B cell (primary cell): ENCODE measurements at regions of chr10 and their contacts with region 1.

Region 1: DNA sequence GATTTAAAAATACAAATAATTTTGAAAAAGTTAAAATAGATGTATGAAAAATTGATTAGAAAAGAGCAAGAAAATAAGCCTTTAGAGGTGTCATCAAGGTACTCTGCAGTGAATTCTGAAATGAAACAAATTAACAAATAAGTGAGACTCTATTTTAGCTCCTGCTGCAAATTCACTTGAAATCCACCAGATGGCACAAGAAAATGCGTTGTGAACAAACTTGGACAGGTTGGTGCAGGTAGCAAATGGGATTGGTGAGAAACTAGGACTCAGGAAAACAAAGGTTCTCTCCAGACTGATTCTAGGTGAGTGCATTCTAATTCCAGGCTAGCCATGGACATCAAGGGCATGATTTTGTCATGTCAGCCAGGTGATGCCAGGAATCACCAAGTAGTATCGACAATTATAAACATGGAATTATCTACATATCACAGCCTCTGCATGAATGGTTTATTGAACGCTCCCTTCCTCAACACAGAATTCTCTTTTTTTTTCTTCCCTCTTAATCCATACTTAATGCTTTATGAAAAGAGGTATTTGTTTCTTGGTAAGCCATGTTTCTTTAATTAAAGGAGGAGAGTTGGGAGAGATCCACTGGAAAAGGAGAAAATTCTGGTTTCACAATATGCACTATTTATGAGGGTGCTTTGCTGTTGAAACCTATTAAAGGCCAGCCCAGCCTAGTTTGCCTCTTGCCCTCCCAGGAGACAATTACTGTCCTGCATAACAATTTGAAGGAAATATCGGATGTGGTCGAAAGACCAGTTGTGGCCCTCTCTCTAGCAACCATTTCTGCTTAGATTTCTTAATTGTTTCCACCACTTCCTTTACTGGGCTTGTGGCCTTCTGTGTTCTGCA is 118.1 kb downstream of the ZNF365 start:
- DNase-seq: peak; percentile 65
- ATAC-seq: peak; percentile 53
- H3K4me3 ChIP-seq: no peak overlapping the region
- H3K4me3 Mint-ChIP-seq: no peak overlapping the region
- H3K27ac ChIP-seq: no peak overlapping the region
- H3K27ac Mint-ChIP-seq: no peak overlapping the region
- H3K4me1 ChIP-seq: peaks cover 9 to 11% of the 10 kb centered on the region in 2 donors
- H3K4me1 Mint-ChIP-seq: peaks cover 26% of the 10 kb centered on the region
- H3K27me3 ChIP-seq: no peaks in the 10 kb centered on the region
- H3K27me3 Mint-ChIP-seq: no peaks in the 10 kb centered on the region
- CTCF ChIP-seq: peak; percentile 85

Region 2: GRCh38 chr10:61974601-61975390 is 517.4 kb before region 1 on chr10:
- CTCF ChIA-PET with region 1: no interaction called
- POLR2A ChIA-PET with region 1: no interaction called
- intact Hi-C with region 1: no loop called
- DNase-seq: peak; percentile 47
- ATAC-seq: no peak
- H3K4me3 ChIP-seq: no peak overlapping the region
- H3K4me3 Mint-ChIP-seq: peak overlapping the region; percentile 47
- H3K27ac ChIP-seq: peak overlapping the region in 1 of 2 donors; percentile 53
- H3K27ac Mint-ChIP-seq: peak overlapping the region; percentile 80
- H3K4me1 ChIP-seq: peaks cover 35 to 50% of the 10 kb centered on the region in 2 donors
- H3K4me1 Mint-ChIP-seq: peaks cover 79% of the 10 kb centered on the region
- H3K27me3 ChIP-seq: no peaks in the 10 kb centered on the region
- H3K27me3 Mint-ChIP-seq: no peaks in the 10 kb centered on the region
- CTCF ChIP-seq: no peak

Region 3: GRCh38 chr10:62456611-62457101 is 35.6 kb before region 1 on chr10:
- CTCF ChIA-PET with region 1: interaction called, 25 read pairs
- POLR2A ChIA-PET with region 1: no interaction called
- intact Hi-C with region 1: loop called (anchors 5 kb)
- DNase-seq: peak; percentile 85
- ATAC-seq: peak; percentile 93
- H3K4me3 ChIP-seq: no peak overlapping the region
- H3K4me3 Mint-ChIP-seq: peak overlapping the region; percentile 63
- H3K27ac ChIP-seq: peak overlapping the region in 1 of 2 donors; percentile 1
- H3K27ac Mint-ChIP-seq: peak overlapping the region; percentile 86
- H3K4me1 ChIP-seq: peaks cover 30 to 33% of the 10 kb centered on the region in 2 donors
- H3K4me1 Mint-ChIP-seq: peaks cover 34% of the 10 kb centered on the region
- H3K27me3 ChIP-seq: no peaks in the 10 kb centered on the region
- H3K27me3 Mint-ChIP-seq: no peaks in the 10 kb centered on the region
- CTCF ChIP-seq: no peak

Region 4: GRCh38 chr10:62480196-62480595 is 12.0 kb before region 1 on chr10:
- CTCF ChIA-PET with region 1: interaction called, 11 read pairs
- POLR2A ChIA-PET with region 1: no interaction called
- intact Hi-C with region 1: no loop called
- DNase-seq: no peak
- ATAC-seq: no peak
- H3K4me3 ChIP-seq: no peak overlapping the region
- H3K4me3 Mint-ChIP-seq: no peak overlapping the region
- H3K27ac ChIP-seq: no peak overlapping the region
- H3K27ac Mint-ChIP-seq: no peak overlapping the region
- H3K4me1 ChIP-seq: peaks cover 4 to 8% of the 10 kb centered on the region in 2 donors
- H3K4me1 Mint-ChIP-seq: peaks cover 3% of the 10 kb centered on the region
- H3K27me3 ChIP-seq: no peaks in the 10 kb centered on the region
- H3K27me3 Mint-ChIP-seq: peaks cover 11% of the 10 kb centered on the region
- CTCF ChIP-seq: no peak

Region 5: DNA sequence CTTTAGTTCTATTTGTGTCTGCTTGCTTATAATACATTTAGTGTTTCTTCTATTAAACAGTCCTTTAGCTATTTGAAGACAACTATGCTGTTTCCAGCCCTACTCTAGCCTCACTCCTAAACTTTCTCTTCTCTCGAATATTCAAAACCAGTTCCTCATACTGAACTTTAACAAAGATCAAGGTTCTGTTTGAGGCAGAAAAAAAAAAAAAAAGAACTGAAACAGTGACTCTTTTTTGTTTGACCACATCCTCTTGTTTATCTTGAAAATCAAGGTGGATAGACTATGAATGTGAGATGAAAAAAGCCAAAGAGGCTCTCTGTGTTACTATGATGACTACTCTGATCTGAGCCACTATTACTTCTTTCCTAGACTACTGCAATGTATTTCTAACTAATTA is 36.2 kb after region 1 on chr10:
- CTCF ChIA-PET with region 1: interaction called, 32 read pairs
- POLR2A ChIA-PET with region 1: interaction called, 3 read pairs
- intact Hi-C with region 1: loop called (anchors 1 kb)
- DNase-seq: peak; percentile 77
- ATAC-seq: peak; percentile 64
- H3K4me3 ChIP-seq: peak overlapping the region in 1 of 5 experiments; percentile 38
- H3K4me3 Mint-ChIP-seq: peak overlapping the region; percentile 66
- H3K27ac ChIP-seq: peak overlapping the region; percentile 84 to 90
- H3K27ac Mint-ChIP-seq: peak overlapping the region; percentile 96
- H3K4me1 ChIP-seq: peaks cover 47 to 51% of the 10 kb centered on the region in 2 donors
- H3K4me1 Mint-ChIP-seq: peaks cover 62% of the 10 kb centered on the region
- H3K27me3 ChIP-seq: no peaks in the 10 kb centered on the region
- H3K27me3 Mint-ChIP-seq: no peaks in the 10 kb centered on the region
- CTCF ChIP-seq: no peak

Region 6: GRCh38 chr10:62554632-62555199 is 62.5 kb after region 1 on chr10:
- CTCF ChIA-PET with region 1: interaction called, 24 read pairs
- POLR2A ChIA-PET with region 1: interaction called, 6 read pairs
- intact Hi-C with region 1: no loop called
- DNase-seq: peak; percentile 36
- ATAC-seq: peak; percentile 43
- H3K4me3 ChIP-seq: no peak overlapping the region
- H3K4me3 Mint-ChIP-seq: no peak overlapping the region
- H3K27ac ChIP-seq: no peak overlapping the region
- H3K27ac Mint-ChIP-seq: no peak overlapping the region
- H3K4me1 ChIP-seq: peaks cover 0 to 6% of the 10 kb centered on the region in 2 donors
- H3K4me1 Mint-ChIP-seq: peaks cover 9% of the 10 kb centered on the region
- H3K27me3 ChIP-seq: no peaks in the 10 kb centered on the region
- H3K27me3 Mint-ChIP-seq: peaks cover 9% of the 10 kb centered on the region
- CTCF ChIP-seq: peak; percentile 53

Region 7: DNA sequence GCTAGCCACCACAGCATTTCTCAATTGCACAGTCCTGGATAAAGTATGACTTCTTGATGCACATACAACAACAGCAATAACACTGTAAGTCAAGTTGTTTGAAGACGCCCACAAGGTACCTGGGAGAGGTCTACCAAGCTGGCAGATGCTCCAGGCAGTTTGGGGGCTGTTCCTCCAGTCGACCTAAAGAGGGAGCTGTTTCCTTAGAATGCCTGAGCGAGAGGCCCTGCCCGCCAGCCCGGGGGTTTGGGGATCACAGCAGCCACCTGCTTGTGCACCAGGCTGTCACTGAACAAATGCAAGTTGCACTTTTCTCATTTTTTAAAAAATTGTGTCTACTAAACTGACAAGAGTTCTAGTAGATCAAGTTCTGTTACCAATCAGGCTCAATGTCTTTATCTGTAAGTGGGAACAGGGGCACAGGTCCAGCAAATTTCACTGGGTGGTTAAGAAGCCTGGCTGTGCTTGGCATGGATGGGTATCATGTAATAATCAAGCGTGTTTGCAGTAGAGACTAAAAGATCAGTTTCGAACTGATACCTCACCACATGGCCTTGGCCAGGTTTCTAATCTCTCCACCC is 118.5 kb after region 1 on chr10:
- CTCF ChIA-PET with region 1: interaction called, 46 read pairs
- POLR2A ChIA-PET with region 1: no interaction called
- intact Hi-C with region 1: loop called (anchors 1 kb)
- DNase-seq: peak; percentile 87
- ATAC-seq: peak; percentile 97
- H3K4me3 ChIP-seq: no peak overlapping the region
- H3K4me3 Mint-ChIP-seq: no peak overlapping the region
- H3K27ac ChIP-seq: no peak overlapping the region
- H3K27ac Mint-ChIP-seq: no peak overlapping the region
- H3K4me1 ChIP-seq: peaks cover 5% of the 10 kb centered on the region in 2 donors
- H3K4me1 Mint-ChIP-seq: peaks cover 12% of the 10 kb centered on the region
- H3K27me3 ChIP-seq: no peaks in the 10 kb centered on the region
- H3K27me3 Mint-ChIP-seq: no peaks in the 10 kb centered on the region
- CTCF ChIP-seq: peak; percentile 86

Region 8: GRCh38 chr10:63157845-63158624 is 665.8 kb after region 1 on chr10:
- CTCF ChIA-PET with region 1: interaction called, 31 read pairs
- POLR2A ChIA-PET with region 1: no interaction called
- intact Hi-C with region 1: loop called (anchors 1 kb)
- DNase-seq: peak; percentile 85
- ATAC-seq: peak; percentile 68
- H3K4me3 ChIP-seq: no peak overlapping the region
- H3K4me3 Mint-ChIP-seq: no peak overlapping the region
- H3K27ac ChIP-seq: no peak overlapping the region
- H3K27ac Mint-ChIP-seq: no peak overlapping the region
- H3K4me1 ChIP-seq: no peaks in the 10 kb centered on the region
- H3K4me1 Mint-ChIP-seq: peaks cover 9% of the 10 kb centered on the region
- H3K27me3 ChIP-seq: no peaks in the 10 kb centered on the region
- H3K27me3 Mint-ChIP-seq: no peaks in the 10 kb centered on the region
- CTCF ChIP-seq: peak; percentile 90